Dendritic cell treated with granulocyte-macrophage colony-stimulating factor and Interleukin-4, amounts not matched to agents 40 ng/mL and 50 ng/mL, for 4 days (primary cell): ENCODE measurements at regions of chr2 and their contacts with region 1.

Region 1: DNA sequence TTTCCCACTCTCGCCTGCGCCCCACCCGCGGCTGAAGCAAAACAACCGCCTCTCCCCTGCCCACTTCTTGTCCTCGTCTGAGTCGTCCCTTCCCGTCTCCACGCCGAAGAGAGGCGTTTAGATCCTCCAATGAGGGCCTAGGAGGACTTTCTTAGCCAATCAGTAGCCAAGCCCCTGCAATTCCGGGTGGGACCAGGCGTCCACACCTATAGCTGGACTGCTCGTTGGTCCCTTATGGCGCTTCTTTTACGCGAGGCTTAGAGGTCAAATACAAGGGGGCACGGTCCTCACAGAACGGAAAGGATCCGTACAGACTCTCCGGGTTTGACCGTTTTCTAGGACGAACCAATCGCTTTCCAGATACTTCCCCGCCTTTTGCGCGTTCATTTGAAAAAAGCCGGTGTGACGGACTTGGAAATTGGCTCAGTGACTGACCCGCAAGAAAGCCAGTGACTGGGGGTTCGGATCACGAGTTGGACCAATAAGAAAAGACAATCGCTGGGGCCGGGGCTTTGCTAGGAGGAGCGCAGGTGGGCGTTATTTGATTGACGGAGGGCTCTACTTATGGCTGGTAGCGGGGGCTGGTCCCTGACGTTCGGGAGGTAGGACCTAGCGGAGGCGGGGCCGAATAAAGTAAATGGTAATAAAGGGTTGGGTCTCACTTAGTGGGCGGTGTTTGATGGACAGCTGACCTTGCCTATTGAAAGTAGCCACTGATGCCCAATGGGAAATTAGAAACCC is 565 bp upstream of the PPM1B start:
- H3K4me3 Mint-ChIP-seq: peak overlapping the region; percentile 79
- H3K27ac Mint-ChIP-seq: peak overlapping the region; percentile 99
- H3K4me1 Mint-ChIP-seq: peaks cover 35% of the 10 kb centered on the region
- H3K27me3 Mint-ChIP-seq: no peaks in the 10 kb centered on the region

Region 2: GRCh38 chr2:43995733-43996533 is 172.2 kb before region 1 on chr2 and contains the start of gene LRPPRC:
- intact Hi-C with region 1: loop called (anchors 10 kb)
- H3K4me3 Mint-ChIP-seq: peak within 1 kb of the TSS; percentile 91
- H3K27ac Mint-ChIP-seq: peak within 1 kb of the TSS; percentile 98
- H3K4me1 Mint-ChIP-seq: peaks cover 34% of the 10 kb centered on the region
- H3K27me3 Mint-ChIP-seq: peaks cover 1% of the 10 kb centered on the region

Region 3: GRCh38 chr2:44087036-44087713 is 80.9 kb before region 1 on chr2:
- intact Hi-C with region 1: loop called (anchors 1 kb)
- H3K4me3 Mint-ChIP-seq: peak overlapping the region; percentile 70
- H3K27ac Mint-ChIP-seq: peak overlapping the region; percentile 73
- H3K4me1 Mint-ChIP-seq: peaks cover 25% of the 10 kb centered on the region
- H3K27me3 Mint-ChIP-seq: peaks cover 2% of the 10 kb centered on the region

Region 4: DNA sequence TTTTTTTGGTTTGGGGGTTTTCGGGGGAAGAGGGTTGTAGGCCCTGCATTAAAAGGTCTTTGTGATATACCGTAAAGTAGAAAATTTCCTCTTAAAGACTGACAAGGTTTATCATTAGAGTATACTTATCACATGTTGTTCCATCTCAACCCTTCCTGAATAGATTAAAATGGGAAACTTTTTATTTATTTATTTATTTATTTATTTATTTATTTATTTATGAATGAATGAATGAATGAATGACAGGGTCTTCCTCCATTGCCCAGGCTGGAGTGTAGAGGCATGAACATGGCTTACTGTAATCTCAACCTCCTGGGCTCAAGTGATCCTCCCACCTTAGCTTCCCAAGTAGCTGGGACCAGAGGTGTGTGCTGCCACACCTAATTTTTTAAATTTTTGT is 58.6 kb after region 1 on chr2:
- intact Hi-C with region 1: loop called (anchors 10 kb)
- H3K4me3 Mint-ChIP-seq: no peak overlapping the region
- H3K27ac Mint-ChIP-seq: no peak overlapping the region
- H3K4me1 Mint-ChIP-seq: no peaks in the 10 kb centered on the region
- H3K27me3 Mint-ChIP-seq: no peaks in the 10 kb centered on the region

Region 5: GRCh38 chr2:44361330-44362206 is 193.5 kb after region 1 on chr2 and contains the starts of genes CAMKMT and PREPL:
- intact Hi-C with region 1: loop called (anchors 2 kb)
- H3K4me3 Mint-ChIP-seq: peak within 1 kb of the TSS; percentile 100
- H3K27ac Mint-ChIP-seq: peak within 1 kb of the TSS; percentile 97
- H3K4me1 Mint-ChIP-seq: peaks cover 31% of the 10 kb centered on the region
- H3K27me3 Mint-ChIP-seq: no peaks in the 10 kb centered on the region